Dorsolateral prefrontal cortex (tissue), 120 donors: ENCODE measurements at regions of chr14 and their contacts with region 1.

Region 1: DNA sequence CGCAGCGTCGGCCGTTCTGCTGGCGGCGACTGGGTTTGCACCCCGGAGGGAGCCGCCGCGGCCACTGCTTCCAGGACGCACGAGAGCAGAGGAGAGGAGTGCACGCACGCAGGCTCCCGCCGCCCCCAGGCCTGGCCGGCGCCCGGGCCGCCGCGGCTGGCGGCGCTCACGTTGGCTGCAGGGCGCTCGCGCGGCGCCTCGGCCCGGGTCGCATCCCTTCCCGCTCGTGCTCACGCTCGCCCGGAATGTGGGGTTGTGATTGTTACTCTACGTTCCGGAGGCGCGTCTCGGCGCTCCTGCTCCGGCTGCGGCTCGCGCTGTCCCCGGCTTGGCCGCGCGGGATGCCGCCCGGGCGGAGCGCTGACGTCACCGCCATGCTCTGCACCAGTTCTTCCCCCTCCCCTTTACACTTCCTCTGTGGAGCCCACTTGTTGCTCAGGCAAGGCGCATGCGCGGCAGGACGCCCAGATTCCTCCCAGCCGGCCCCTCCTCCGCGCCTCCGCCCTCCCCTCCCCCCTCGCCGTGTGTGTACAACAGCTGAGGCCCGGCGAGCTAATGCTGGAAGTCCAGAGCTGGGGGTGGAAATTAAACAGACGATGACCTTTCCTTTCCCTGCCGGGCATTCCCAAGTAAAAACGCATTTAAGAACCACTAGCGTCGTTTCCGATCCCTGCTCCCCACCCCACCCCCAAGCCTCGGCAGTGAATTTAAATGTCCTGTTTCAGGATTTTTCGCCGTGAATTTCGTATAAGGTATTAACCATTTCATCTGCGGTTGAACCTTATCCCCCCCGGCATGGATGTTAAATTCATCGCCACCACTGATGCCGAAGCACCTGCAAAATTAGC is at the start of gene IRF2BPL:
- DNase-seq: peak; percentile 96 to 98 (median 97)
- H3K4me3 ChIP-seq: peak within 1 kb of the TSS; percentile 49 to 94 (median 83)
- H3K27ac ChIP-seq: peak within 1 kb of the TSS; percentile 93 to 100 (median 100)
- H3K27me3 ChIP-seq: no peaks in the 10 kb centered on the region
- CTCF ChIP-seq: peak in 10 of 56 donors; percentile 7 to 35 (median 20)
- total RNA-seq, gene IRF2BPL: 30.1 to 62.8 (median 41.3) TPM

Region 2: DNA sequence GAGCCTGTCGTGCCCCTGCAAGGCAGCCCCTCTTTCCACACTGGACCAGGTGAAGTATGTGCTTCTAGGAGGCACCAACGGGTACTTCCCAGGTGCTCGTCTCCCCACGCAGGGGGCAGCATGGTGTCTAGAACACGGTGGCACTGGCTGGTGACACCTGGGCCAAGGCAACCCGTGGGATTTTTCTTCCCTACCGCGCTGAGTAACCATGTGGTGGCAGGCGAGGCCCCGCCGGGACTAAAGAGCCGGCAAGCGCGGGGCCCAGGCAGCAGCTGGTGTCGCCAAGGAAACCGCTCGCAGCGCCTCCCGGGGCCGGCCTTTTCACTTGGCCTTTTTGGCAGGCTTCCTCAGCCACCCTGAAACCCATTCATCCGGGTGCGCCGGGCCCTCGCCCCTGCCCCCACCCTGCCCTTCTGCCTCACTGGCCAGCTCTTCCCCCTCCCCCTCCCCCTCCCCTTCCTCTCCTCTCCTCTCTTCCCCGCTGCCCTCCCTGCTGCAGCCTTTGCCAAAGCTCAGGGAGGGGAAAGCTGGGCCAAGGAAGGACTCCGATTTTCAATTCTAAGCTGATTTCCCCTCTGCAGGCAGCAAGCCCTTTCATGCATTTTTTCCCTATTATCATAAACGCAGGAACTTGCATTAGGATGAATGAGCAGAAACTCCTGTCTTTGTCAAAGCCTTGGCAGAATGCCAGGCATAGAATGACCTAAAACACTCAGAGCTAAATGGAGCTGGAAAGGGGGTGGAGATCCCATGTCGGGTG is 81.3 kb before region 1 on chr14:
- intact Hi-C with region 1: loop called (anchors 1 to 5 kb)
- DNase-seq: peak; percentile 88 to 96 (median 94)
- H3K4me3 ChIP-seq: peak overlapping the region in 48 of 59 donors; percentile 0 to 46 (median 32)
- H3K27ac ChIP-seq: peak overlapping the region; percentile 27 to 94 (median 87)
- H3K27me3 ChIP-seq: no peaks in the 10 kb centered on the region
- CTCF ChIP-seq: peak in 55 of 56 donors; percentile 39 to 88 (median 72)

Region 3: GRCh38 chr14:77040059-77040740 is 11.6 kb after region 1 on chr14:
- intact Hi-C with region 1: loop called (anchors 1 kb)
- DNase-seq: peak; percentile 93 to 99 (median 96)
- H3K4me3 ChIP-seq: peak overlapping the region in 58 of 59 donors; percentile 4 to 63 (median 44)
- H3K27ac ChIP-seq: peak overlapping the region; percentile 82 to 100 (median 98)
- H3K27me3 ChIP-seq: no peaks in the 10 kb centered on the region
- CTCF ChIP-seq: peak in 12 of 56 donors; percentile 15 to 38 (median 23)